Activated CD8-positive, alpha-beta T cell treated with anti-CD3 and anti-CD28 coated beads for 36 hours (primary cell): ENCODE measurements at regions of chr3 and their contacts with region 1.

Region 1: DNA sequence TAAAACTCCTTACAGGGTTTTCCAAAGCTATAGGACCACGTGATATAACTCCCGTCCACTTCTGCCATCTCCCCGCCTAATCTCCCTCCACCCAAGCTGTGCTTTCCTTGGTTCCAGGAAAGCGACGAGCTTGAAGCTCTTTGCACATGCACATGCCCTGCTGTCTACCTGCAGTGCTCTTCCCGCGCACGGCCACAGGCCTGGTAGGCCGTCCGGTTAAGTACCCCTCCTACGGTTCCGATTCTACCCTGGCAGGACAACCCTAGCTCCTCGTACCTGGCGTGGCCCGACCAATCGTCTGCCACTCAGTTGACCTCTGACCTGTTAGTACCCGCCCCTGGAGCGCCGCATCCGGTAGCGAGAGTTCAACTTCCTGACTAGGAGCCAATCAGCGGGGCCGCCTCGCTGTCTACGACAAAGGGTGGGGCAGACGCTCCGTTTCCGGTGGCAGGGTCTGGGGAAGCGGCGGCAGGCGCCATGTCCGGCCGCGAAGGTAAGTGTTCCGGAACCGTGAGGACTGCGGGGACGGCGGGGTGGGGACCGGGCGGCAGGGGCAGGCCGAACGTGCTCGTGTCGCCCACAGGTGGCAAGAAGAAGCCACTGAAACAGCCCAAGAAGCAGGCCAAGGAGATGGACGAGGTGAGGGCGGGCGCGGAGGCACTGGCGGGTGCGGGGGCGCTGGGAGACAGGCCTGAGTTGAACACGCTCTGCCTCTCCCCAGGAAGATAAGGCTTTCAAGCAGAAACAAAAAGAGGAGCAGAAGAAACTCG is at the starts of genes CCDC51 and TMA7:
- DNase-seq: peak; percentile 99
- ATAC-seq: peak; percentile 98
- H3K4me3 Mint-ChIP-seq: peak within 1 kb of the TSS; percentile 89
- H3K27ac Mint-ChIP-seq: peak within 1 kb of the TSS; percentile 97
- H3K4me1 Mint-ChIP-seq: peaks cover 30% of the 10 kb centered on the region
- H3K27me3 Mint-ChIP-seq: no peaks in the 10 kb centered on the region
- CTCF ChIP-seq: no peak
- total RNA-seq, gene CCDC51: 25.3 to 28.3 TPM
- total RNA-seq, gene TMA7: 312 to 334 TPM

Region 2: DNA sequence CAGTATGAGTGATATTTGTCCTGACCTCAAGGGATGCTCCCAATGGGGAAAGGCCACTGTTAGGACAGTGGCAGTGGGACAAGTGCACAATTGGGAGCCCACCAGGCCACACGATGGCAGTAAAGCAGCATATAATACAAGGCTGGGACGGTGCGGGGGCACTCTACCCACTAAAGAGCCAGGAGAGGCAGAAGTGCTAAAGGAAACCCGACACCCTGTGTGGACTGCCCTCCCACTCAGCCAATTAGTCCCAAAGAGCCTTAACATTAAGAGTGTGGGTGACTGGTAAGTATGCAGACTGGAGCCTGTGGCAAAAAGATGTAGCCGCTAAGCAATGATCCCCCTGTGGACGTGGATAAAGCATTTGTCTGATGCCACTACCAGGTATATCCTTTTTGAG is 207.3 kb before region 1 on chr3:
- CTCF ChIA-PET with region 1: interaction called, 91 read pairs
- POLR2A ChIA-PET with region 1: interaction called, 4 read pairs
- intact Hi-C with region 1: loop called (anchors 1 kb)
- DNase-seq: peak; percentile 87
- ATAC-seq: peak; percentile 99
- H3K4me3 Mint-ChIP-seq: no peak overlapping the region
- H3K27ac Mint-ChIP-seq: no peak overlapping the region
- H3K4me1 Mint-ChIP-seq: no peaks in the 10 kb centered on the region
- H3K27me3 Mint-ChIP-seq: no peaks in the 10 kb centered on the region
- CTCF ChIP-seq: peak; percentile 85

Region 3: GRCh38 chr3:48273594-48274211 is 166.3 kb before region 1 on chr3:
- CTCF ChIA-PET with region 1: interaction called, 135 read pairs
- POLR2A ChIA-PET with region 1: interaction called, 8 read pairs
- intact Hi-C with region 1: loop called (anchors 5 kb)
- DNase-seq: peak; percentile 67
- ATAC-seq: peak; percentile 24
- H3K4me3 Mint-ChIP-seq: no peak overlapping the region
- H3K27ac Mint-ChIP-seq: no peak overlapping the region
- H3K4me1 Mint-ChIP-seq: peaks cover 23% of the 10 kb centered on the region
- H3K27me3 Mint-ChIP-seq: no peaks in the 10 kb centered on the region
- CTCF ChIP-seq: peak; percentile 79

Region 4: GRCh38 chr3:48388966-48389365 is 51.0 kb before region 1 on chr3:
- CTCF ChIA-PET with region 1: interaction called, 26 read pairs
- POLR2A ChIA-PET with region 1: no interaction called
- intact Hi-C with region 1: no loop called
- DNase-seq: no peak
- ATAC-seq: no peak
- H3K4me3 Mint-ChIP-seq: no peak overlapping the region
- H3K27ac Mint-ChIP-seq: no peak overlapping the region
- H3K4me1 Mint-ChIP-seq: no peaks in the 10 kb centered on the region
- H3K27me3 Mint-ChIP-seq: peaks cover 11% of the 10 kb centered on the region
- CTCF ChIP-seq: no peak

Region 5: DNA sequence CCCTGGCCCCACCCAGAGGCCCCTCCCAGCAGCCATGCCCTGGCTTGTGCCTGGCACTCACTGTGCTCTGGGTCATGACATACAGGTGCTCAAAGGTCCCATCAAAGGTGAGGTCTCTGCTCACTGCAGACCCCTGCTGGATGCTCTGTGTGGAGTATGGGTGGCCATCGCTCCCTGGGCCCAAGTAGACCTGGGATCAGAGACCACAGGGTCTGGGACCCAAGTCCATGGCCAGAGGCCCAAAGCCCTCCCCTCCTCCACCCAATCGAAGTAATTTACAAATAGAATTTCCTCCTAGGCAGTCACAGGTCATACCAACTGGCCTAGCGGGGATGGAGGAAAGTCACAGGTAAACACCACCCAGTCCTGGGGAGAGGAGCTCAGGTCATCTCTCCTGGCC is 17.7 kb before region 1 on chr3:
- CTCF ChIA-PET with region 1: interaction called, 27 read pairs
- POLR2A ChIA-PET with region 1: interaction called, 6 read pairs
- intact Hi-C with region 1: no loop called
- DNase-seq: peak; percentile 16
- ATAC-seq: no peak
- H3K4me3 Mint-ChIP-seq: no peak overlapping the region
- H3K27ac Mint-ChIP-seq: no peak overlapping the region
- H3K4me1 Mint-ChIP-seq: no peaks in the 10 kb centered on the region
- H3K27me3 Mint-ChIP-seq: no peaks in the 10 kb centered on the region
- CTCF ChIP-seq: no peak

Region 6: GRCh38 chr3:48507351-48508061 is 67.5 kb after region 1 on chr3:
- CTCF ChIA-PET with region 1: interaction called, 31 read pairs
- POLR2A ChIA-PET with region 1: no interaction called
- intact Hi-C with region 1: no loop called
- DNase-seq: peak; percentile 88
- ATAC-seq: peak; percentile 87
- H3K4me3 Mint-ChIP-seq: no peak overlapping the region
- H3K27ac Mint-ChIP-seq: peak overlapping the region; percentile 49
- H3K4me1 Mint-ChIP-seq: peaks cover 36% of the 10 kb centered on the region
- H3K27me3 Mint-ChIP-seq: no peaks in the 10 kb centered on the region
- CTCF ChIP-seq: peak; percentile 57